Heart right ventricle (tissue), 16 donors: ENCODE measurements at regions of chr2 and their contacts with region 1.

Region 1: GRCh38 chr2:190365499-190366204 is 22.3 kb downstream of the INPP1 start:
- DNase-seq: no peak
- ATAC-seq: no peak
- H3K4me3 ChIP-seq: no peak overlapping the region
- H3K27ac ChIP-seq: no peak overlapping the region
- H3K4me1 ChIP-seq: peaks cover 0 to 4% (median under 1%) of the 10 kb centered on the region in 9 donors
- H3K27me3 ChIP-seq: no peaks in the 10 kb centered on the region
- CTCF ChIP-seq: no peak

Region 2: GRCh38 chr2:190328573-190329147 is 37.0 kb before region 1 on chr2:
- intact Hi-C with region 1: loop called in 3 of 10 experiments (anchors 5 kb)
- DNase-seq: no peak
- ATAC-seq: no peak
- H3K4me3 ChIP-seq: no peak overlapping the region
- H3K27ac ChIP-seq: no peak overlapping the region
- H3K4me1 ChIP-seq: peaks cover 0 to 6% (median 0%) of the 10 kb centered on the region in 9 donors
- H3K27me3 ChIP-seq: no peaks in the 10 kb centered on the region
- CTCF ChIP-seq: peak in 8 of 9 donors; percentile 10 to 52 (median 30)

Region 3: DNA sequence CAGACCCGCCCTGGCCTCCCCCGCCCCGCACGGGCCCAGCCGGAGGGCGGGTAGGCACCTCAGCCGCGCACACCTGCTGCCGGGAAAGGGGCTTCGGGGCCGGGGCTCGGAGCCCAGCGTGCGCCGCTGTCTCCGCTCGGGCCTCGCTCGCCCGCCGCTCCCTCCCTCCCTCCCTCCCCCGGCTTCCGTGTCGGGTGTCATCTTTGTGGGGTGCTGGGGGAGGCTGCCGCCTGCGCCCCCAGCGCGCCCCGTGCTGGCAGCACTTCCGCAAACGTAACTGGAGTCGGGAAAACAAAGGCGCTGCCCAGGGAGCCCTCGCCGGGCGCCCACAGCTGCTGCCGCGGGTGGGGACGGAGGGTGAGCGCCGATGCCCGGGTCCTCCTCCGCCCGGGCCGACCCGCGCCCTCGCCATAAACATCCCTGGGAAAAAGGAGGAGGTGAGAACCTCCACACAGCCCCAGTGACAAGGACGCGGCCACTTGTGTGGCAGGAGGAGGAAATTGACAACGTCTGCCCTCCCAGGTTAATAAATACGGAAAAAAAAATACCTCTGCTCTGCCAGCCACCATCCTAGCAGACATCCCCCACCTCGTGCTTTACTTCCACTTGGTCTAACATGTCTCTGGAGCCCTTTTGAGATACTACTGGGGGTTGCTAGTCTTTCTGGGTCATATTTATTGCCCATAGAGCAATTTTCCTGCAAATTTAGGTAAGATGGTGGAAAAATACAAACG is 43.1 kb after region 1 on chr2:
- intact Hi-C with region 1: no loop called
- DNase-seq: peak; percentile 29 to 61
- ATAC-seq: peak; percentile 34 to 62 (median 58)
- H3K4me3 ChIP-seq: peak overlapping the region; percentile 60 to 97 (median 84)
- H3K27ac ChIP-seq: peak overlapping the region; percentile 81 to 95 (median 90)
- H3K4me1 ChIP-seq: peaks cover 0 to 50% (median 35%) of the 10 kb centered on the region in 9 donors
- H3K27me3 ChIP-seq: peaks cover 0 to 6% (median 0%) of the 10 kb centered on the region in 7 donors
- CTCF ChIP-seq: no peak